ENCODE measurements at regions of chr5 and their contacts with region 1.

Region 1: DNA sequence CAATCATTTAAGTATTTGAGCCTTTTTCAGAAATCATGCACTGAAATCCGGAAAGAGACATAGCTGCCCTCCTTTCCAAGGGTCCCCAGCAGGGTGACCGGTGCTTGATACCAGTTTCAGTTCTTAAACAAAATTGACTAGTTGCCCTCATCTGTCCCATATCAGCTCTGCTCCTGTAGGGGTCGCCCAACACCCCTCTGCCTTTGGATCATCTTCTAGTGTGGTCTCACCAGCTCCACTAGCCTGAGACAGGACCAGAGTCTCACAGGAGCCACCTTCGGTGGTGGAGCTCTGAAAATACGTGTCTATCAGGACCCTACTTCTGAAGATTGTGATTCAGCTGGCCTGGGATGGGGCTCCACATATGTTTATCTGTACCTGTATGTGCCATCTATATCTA is 428.2 kb downstream of the ENC1 start:
- DNase-seq: no peak
- ATAC-seq: peak; percentile 78
- H3K4me3 ChIP-seq: no peak overlapping the region
- H3K27ac ChIP-seq: no peak overlapping the region
- H3K4me1 ChIP-seq: no peaks in the 10 kb centered on the region
- H3K27me3 ChIP-seq: no peaks in the 10 kb centered on the region
- CTCF ChIP-seq: peak; percentile 36 to 53 (median 52); a peak in 5 of 6 replicates
- EP300 ChIP-seq: no peak
- POLR2A ChIP-seq: no peak
- RAD21 ChIP-seq: peak; percentile 48; the same call in 1 of the 2 replicates

Region 2: GRCh38 chr5:74201334-74202081 is 10.8 kb before region 1 on chr5:
- CTCF ChIA-PET with region 1: interaction called, 15 read pairs
- POLR2A ChIA-PET with region 1: no interaction called
- RAD21 ChIA-PET with region 1: no interaction called
- SMC1A ChIA-PET with region 1: interaction called, 6 read pairs
- in situ Hi-C with region 1: no loop called
- intact Hi-C with region 1: no loop called
- DNase-seq: peak; percentile 63
- ATAC-seq: peak; percentile 73
- H3K4me3 ChIP-seq: no peak overlapping the region
- H3K27ac ChIP-seq: peak overlapping the region; percentile 28; the same call in 1 of the 2 replicates
- H3K4me1 ChIP-seq: peaks cover 35% of the 10 kb centered on the region
- H3K27me3 ChIP-seq: no peaks in the 10 kb centered on the region
- CTCF ChIP-seq: peak in 1 of 3 experiments; percentile 12; a peak in 1 of 6 replicates
- EP300 ChIP-seq: 0 out of 4 replicates have a peak, but pooled peaks of 1 of the 2 experiments have one; percentile 18
- POLR2A ChIP-seq: no peak
- RAD21 ChIP-seq: no peak

Region 3: GRCh38 chr5:74226716-74227485 is 14.6 kb after region 1 on chr5:
- CTCF ChIA-PET with region 1: interaction called, 3 read pairs
- POLR2A ChIA-PET with region 1: no interaction called
- RAD21 ChIA-PET with region 1: no interaction called
- SMC1A ChIA-PET with region 1: interaction called, 11 read pairs
- in situ Hi-C with region 1: no loop called
- intact Hi-C with region 1: no loop called
- DNase-seq: no peak
- ATAC-seq: no peak
- H3K4me3 ChIP-seq: no peak overlapping the region
- H3K27ac ChIP-seq: no peak overlapping the region
- H3K4me1 ChIP-seq: no peaks in the 10 kb centered on the region
- H3K27me3 ChIP-seq: no peaks in the 10 kb centered on the region; a peak in 1 of 4 replicates
- CTCF ChIP-seq: no peak
- EP300 ChIP-seq: no peak
- POLR2A ChIP-seq: no peak
- RAD21 ChIP-seq: no peak

Region 4: DNA sequence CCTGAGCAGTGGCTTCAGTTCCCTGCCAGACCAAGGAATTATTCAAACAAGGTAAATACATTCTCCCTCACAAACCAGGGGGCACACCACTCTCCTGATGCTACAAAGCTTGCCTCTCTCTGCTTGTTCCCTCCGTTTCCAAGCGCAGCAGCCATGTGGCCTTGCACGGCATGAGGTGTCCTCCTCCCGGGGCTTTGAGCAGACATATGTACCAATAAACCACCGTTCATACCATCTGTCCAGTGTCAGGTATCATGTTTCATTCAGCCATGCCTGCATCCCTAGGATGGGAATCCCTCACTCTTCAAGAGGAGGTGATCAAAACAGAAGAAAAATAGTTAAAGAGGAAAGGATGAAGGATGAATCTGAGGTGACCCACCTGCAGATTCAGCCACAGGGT is 145.5 kb after region 1 on chr5:
- CTCF ChIA-PET with region 1: no interaction called
- POLR2A ChIA-PET with region 1: no interaction called
- RAD21 ChIA-PET with region 1: no interaction called
- SMC1A ChIA-PET with region 1: no interaction called
- in situ Hi-C with region 1: no loop called
- intact Hi-C with region 1: no loop called
- DNase-seq: no peak
- ATAC-seq: no peak
- H3K4me3 ChIP-seq: no peak overlapping the region
- H3K27ac ChIP-seq: no peak overlapping the region
- H3K4me1 ChIP-seq: no peaks in the 10 kb centered on the region
- H3K27me3 ChIP-seq: no peaks in the 10 kb centered on the region
- CTCF ChIP-seq: no peak
- EP300 ChIP-seq: no peak
- POLR2A ChIP-seq: no peak
- RAD21 ChIP-seq: no peak